ENCODE measurements at regions of chr16 and their contacts with region 1.

Region 1: GRCh38 chr16:80656711-80657150 is 115.9 kb downstream of the DYNLRB2 start:
- DNase-seq: peak; percentile 53
- H3K4me3 Mint-ChIP-seq: peak overlapping the region; percentile 81
- H3K27ac Mint-ChIP-seq: peak overlapping the region; percentile 75
- H3K4me1 Mint-ChIP-seq: peaks cover 34% of the 10 kb centered on the region
- H3K27me3 Mint-ChIP-seq: peaks cover 3% of the 10 kb centered on the region

Region 2: DNA sequence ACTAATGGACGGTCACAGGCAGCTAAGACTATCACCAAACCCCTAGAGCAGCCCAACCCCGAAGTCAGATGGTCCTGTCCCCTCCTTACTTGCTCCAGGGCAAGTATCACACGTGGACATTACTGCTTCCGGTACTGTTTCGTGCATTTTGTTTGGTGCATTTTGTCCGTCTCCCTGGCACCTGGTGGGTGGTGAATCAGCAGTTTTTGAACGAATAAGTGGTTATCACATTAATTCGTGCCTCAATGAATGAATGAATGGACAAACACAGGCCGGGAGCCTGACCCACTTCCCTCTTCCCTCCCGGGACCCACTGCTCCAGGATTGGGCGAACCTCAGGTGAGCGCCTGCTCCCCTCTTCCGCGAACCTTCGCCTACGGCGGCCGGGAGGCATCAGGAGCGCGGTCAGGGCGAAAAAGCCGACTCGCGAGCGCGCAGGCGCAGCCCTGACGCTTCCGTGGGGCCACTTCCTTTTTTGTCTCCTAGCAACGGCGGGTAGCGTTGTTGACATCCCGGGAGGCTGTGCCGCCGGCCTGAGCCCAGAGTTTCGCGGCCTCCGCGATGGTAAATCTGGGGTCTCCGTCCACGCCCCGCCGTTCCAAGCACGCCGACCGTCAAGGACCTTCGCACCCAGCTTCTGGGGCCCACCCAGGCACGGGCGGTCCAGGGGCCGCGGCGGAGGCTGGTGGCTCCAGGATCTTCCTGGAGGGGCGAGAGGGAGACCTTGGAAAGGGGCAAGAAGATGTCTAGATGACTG is 116.0 kb before region 1 on chr16 and contains the start of gene DYNLRB2:
- intact Hi-C with region 1: loop called (anchors 2 kb)
- DNase-seq: peak; percentile 90
- H3K4me3 Mint-ChIP-seq: peak within 1 kb of the TSS; percentile 88
- H3K27ac Mint-ChIP-seq: peak within 1 kb of the TSS; percentile 93
- H3K4me1 Mint-ChIP-seq: peaks cover 28% of the 10 kb centered on the region
- H3K27me3 Mint-ChIP-seq: peaks cover 13% of the 10 kb centered on the region
- total RNA-seq, gene DYNLRB2: not detected in 2 replicates

Region 3: GRCh38 chr16:80591071-80591915 is 65.4 kb before region 1 on chr16:
- intact Hi-C with region 1: loop called (anchors 2 kb)
- DNase-seq: peak; percentile 58
- H3K4me3 Mint-ChIP-seq: peak overlapping the region; percentile 53
- H3K27ac Mint-ChIP-seq: peak overlapping the region; percentile 48
- H3K4me1 Mint-ChIP-seq: peaks cover 39% of the 10 kb centered on the region
- H3K27me3 Mint-ChIP-seq: peaks cover 50% of the 10 kb centered on the region

Region 4: GRCh38 chr16:80643221-80643620 is 13.5 kb before region 1 on chr16:
- intact Hi-C with region 1: no loop called
- DNase-seq: no peak
- H3K4me3 Mint-ChIP-seq: no peak overlapping the region
- H3K27ac Mint-ChIP-seq: no peak overlapping the region
- H3K4me1 Mint-ChIP-seq: no peaks in the 10 kb centered on the region
- H3K27me3 Mint-ChIP-seq: peaks cover 6% of the 10 kb centered on the region

Region 5: GRCh38 chr16:80691111-80691741 is 34.5 kb after region 1 on chr16:
- intact Hi-C with region 1: loop called (anchors 5 kb)
- DNase-seq: no peak
- H3K4me3 Mint-ChIP-seq: no peak overlapping the region
- H3K27ac Mint-ChIP-seq: no peak overlapping the region
- H3K4me1 Mint-ChIP-seq: peaks cover 42% of the 10 kb centered on the region
- H3K27me3 Mint-ChIP-seq: no peaks in the 10 kb centered on the region

Region 6: GRCh38 chr16:80759419-80760162 is 102.9 kb after region 1 on chr16:
- intact Hi-C with region 1: loop called (anchors 10 kb)
- DNase-seq: no peak
- H3K4me3 Mint-ChIP-seq: no peak overlapping the region
- H3K27ac Mint-ChIP-seq: peak overlapping the region; percentile 80
- H3K4me1 Mint-ChIP-seq: peaks cover 22% of the 10 kb centered on the region
- H3K27me3 Mint-ChIP-seq: no peaks in the 10 kb centered on the region

Region 7: GRCh38 chr16:80804056-80804450 is 147.3 kb after region 1 on chr16:
- intact Hi-C with region 1: loop called (anchors 2 kb)
- DNase-seq: peak; percentile 53
- H3K4me3 Mint-ChIP-seq: peak overlapping the region; percentile 94
- H3K27ac Mint-ChIP-seq: peak overlapping the region; percentile 90
- H3K4me1 Mint-ChIP-seq: peaks cover 49% of the 10 kb centered on the region
- H3K27me3 Mint-ChIP-seq: no peaks in the 10 kb centered on the region